A549 (cell line): ENCODE measurements at regions of chr14 and their contacts with region 1.

Region 1: GRCh38 chr14:94748667-94749347 is 21.1 kb downstream of the GSC start:
- DNase-seq: peak; percentile 60 to 62
- ATAC-seq: peak; percentile 92 to 96
- H3K4me3 ChIP-seq: no peak overlapping the region
- H3K27ac ChIP-seq: no peak overlapping the region
- H3K4me1 ChIP-seq: no peaks in the 10 kb centered on the region
- CTCF ChIP-seq: peak; percentile 71
- EP300 ChIP-seq: no peak
- POLR2A ChIP-seq: no peak
- RAD21 ChIP-seq: peak; percentile 60 to 66

Region 2: GRCh38 chr14:94697773-94698556 is 50.8 kb before region 1 on chr14:
- CTCF ChIA-PET with region 1: interaction called, 12 read pairs
- POLR2A ChIA-PET with region 1: no interaction called
- DNase-seq: no peak
- ATAC-seq: no peak
- H3K4me3 ChIP-seq: no peak overlapping the region
- H3K27ac ChIP-seq: no peak overlapping the region
- H3K4me1 ChIP-seq: no peaks in the 10 kb centered on the region
- CTCF ChIP-seq: no peak
- EP300 ChIP-seq: no peak
- POLR2A ChIP-seq: no peak
- RAD21 ChIP-seq: no peak

Region 3: GRCh38 chr14:94738751-94739150 is 10.1 kb before region 1 on chr14:
- CTCF ChIA-PET with region 1: interaction called, 12 read pairs
- POLR2A ChIA-PET with region 1: no interaction called
- DNase-seq: no peak
- ATAC-seq: no peak
- H3K4me3 ChIP-seq: no peak overlapping the region
- H3K27ac ChIP-seq: no peak overlapping the region
- H3K4me1 ChIP-seq: no peaks in the 10 kb centered on the region
- CTCF ChIP-seq: no peak
- EP300 ChIP-seq: no peak
- POLR2A ChIP-seq: no peak
- RAD21 ChIP-seq: no peak